HCT116 (cell line): ENCODE measurements at regions of chr5 and their contacts with region 1.

Region 1: GRCh38 chr5:67050136-67050535 is 146.5 kb downstream of the CD180 start:
- DNase-seq: no peak
- ATAC-seq: no peak
- H3K4me3 ChIP-seq: no peak overlapping the region
- H3K27ac ChIP-seq: no peak overlapping the region
- H3K4me1 ChIP-seq: no peaks in the 10 kb centered on the region
- H3K27me3 ChIP-seq: peaks cover 44% of the 10 kb centered on the region
- CTCF ChIP-seq: no peak
- POLR2A ChIP-seq: no peak
- RAD21 ChIP-seq: no peak

Region 2: DNA sequence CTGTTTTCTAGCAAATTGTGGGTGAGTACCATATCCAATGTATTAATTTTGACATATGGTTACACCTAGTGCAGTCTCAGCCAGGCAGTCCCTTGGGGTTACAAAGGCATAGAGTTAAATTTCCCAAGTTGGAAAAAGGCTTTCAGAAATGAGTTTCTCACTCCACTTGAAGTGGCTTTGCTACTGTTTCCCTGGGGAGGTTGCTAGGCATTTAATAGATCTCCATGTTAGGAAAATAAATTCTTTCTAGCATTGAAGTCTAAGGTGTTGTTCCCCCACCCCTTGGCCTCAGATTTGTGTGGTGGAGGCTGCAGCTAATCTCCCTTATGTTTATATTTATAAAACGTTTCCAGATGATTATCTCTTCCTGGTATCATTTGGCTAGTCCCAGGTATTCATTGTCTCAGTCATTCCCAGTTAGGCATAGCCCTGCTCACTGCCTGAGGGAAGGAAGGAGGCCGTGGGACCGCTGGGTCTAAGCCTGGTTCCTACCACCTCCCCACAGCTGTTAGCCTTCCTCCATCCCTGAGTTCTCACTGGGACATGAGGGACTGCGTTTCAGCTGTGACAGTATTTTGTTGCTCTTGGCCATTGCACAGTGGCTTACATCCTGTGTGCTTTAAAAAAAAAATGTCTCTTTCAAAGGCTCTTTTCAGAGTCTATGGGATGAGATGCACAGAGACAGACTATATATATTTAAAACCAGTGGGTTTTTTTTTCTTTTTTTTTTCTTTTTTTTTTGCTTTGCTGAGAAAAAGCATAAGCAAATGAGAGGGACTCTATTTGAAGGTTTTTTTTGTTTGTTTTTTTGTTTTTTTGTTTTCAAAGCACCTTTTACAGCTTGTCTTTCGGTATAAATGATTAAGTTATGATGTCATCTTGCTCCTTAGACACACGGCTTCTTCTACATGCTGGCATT is 332.4 kb before region 1 on chr5:
- CTCF ChIA-PET with region 1: no interaction called
- POLR2A ChIA-PET with region 1: no interaction called
- RAD21 ChIA-PET with region 1: no interaction called
- intact Hi-C with region 1: no loop called
- DNase-seq: no peak
- ATAC-seq: no peak
- H3K4me3 ChIP-seq: no peak overlapping the region
- H3K27ac ChIP-seq: no peak overlapping the region
- H3K4me1 ChIP-seq: peaks cover 0 to 4% of the 10 kb centered on the region in 2 experiments; a peak in 1 of 4 replicates
- H3K27me3 ChIP-seq: peaks cover 24% of the 10 kb centered on the region
- CTCF ChIP-seq: no peak
- POLR2A ChIP-seq: no peak
- RAD21 ChIP-seq: no peak

Region 3: GRCh38 chr5:67094476-67095300 is 44.6 kb after region 1 on chr5:
- CTCF ChIA-PET with region 1: no interaction called
- POLR2A ChIA-PET with region 1: no interaction called
- RAD21 ChIA-PET with region 1: no interaction called
- intact Hi-C with region 1: loop called (anchors 5 kb)
- DNase-seq: no peak
- ATAC-seq: no peak
- H3K4me3 ChIP-seq: no peak overlapping the region
- H3K27ac ChIP-seq: no peak overlapping the region
- H3K4me1 ChIP-seq: no peaks in the 10 kb centered on the region
- H3K27me3 ChIP-seq: peaks cover 10% of the 10 kb centered on the region; the same call in 1 of the 2 replicates
- CTCF ChIP-seq: no peak
- POLR2A ChIP-seq: no peak
- RAD21 ChIP-seq: no peak

Region 4: DNA sequence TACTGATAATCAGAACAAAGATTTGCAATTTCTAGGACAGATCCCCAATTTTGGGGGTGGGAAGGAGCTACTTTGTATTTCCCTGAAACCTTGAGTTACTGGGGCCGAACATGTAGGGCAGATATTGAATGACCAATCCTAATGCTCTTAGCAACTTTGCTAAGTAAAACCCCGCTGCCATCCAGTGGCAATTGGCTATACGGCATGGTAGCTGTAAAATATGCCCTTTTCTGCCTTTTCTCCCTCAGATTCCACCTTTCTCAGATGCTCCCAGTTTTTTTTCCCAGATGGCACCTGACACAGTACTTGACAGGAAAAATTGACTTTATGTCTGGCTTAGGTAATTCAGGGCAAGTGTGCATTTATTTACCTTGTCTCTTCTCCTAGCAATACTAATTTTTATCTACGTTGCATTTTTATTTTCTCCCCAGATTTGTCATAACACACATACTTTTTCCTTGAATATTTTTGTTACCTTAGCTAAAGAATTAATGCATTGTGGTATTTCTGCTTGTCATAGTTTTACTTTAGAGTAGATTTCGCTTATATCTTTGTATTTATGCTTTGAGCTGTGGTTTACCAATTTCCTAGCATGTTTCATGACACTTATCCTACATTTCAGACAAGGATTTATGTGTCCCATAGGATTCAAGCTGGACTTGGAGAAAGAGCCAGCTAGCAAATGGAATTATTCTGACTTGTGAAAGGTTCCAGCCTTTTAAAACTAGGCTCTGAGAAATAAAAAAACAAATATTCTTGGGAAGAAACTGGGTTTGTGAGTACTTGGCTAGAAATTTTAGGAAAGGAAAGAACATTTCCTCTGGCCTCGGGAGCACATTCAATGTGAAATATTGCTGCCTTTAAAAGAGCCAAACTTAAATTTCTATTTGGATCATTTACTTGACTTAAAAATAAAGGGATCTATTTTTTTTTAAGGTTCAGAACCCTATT is 1202.8 kb after region 1 on chr5:
- CTCF ChIA-PET with region 1: no interaction called
- POLR2A ChIA-PET with region 1: no interaction called
- RAD21 ChIA-PET with region 1: no interaction called
- intact Hi-C with region 1: no loop called
- DNase-seq: peak; percentile 46
- ATAC-seq: peak; percentile 94
- H3K4me3 ChIP-seq: no peak overlapping the region
- H3K27ac ChIP-seq: no peak overlapping the region
- H3K4me1 ChIP-seq: no peaks in the 10 kb centered on the region
- H3K27me3 ChIP-seq: no peaks in the 10 kb centered on the region
- CTCF ChIP-seq: peak; percentile 56 to 85 (median 84); a peak in 5 of 6 replicates
- POLR2A ChIP-seq: no peak
- RAD21 ChIP-seq: peak; percentile 90